Activated T-helper 2 cell treated with anti-CD3 and anti-CD28 coated beads, Interferon-gamma antibody, Interleukin-2, Interleukin-4, amounts not matched to agents 10 μg/mL and 5 μg/mL and 100 μg/mL, durations not matched to agents 14 hours and 24 hours and 36 hours (primary cell): ENCODE measurements at regions of chr12 and their contacts with region 1.

Region 1: DNA sequence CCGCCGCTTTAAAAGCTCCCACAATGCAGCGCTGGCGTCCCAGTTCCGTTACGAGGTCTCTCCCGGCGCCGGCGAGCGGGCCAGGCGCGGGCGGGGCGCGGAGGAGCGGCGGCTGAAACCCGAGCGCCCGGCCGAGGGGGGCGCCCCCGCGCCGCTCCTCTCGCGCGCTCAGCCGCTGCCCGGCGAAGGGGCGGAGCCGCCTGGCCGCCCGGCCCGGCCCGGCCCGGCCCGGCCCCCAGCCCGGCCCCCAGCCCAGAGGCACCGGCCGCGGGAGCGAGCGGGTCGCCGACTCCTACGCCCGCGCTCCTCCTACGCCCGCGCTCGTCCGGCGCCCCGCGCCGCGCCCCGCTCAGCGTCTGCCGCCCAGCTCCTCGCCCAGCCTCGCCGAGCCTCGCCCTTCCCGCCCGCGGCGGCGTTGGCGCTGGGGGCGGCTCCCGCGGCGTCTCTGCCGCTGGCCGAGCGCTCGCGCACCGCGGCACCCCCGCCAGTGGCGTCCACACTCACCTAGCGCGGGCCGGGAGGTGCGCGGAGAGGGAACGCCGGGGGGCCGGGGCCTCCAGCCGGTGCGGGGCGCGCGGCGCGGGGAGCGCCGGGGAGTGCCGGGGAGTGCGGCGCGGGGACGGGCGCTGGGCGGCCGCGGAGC is at the start of gene RASSF8:
- DNase-seq: peak; percentile 11
- H3K4me3 Mint-ChIP-seq: peak within 1 kb of the TSS; percentile 79
- H3K27ac Mint-ChIP-seq: no peak within 1 kb of the TSS
- H3K4me1 Mint-ChIP-seq: peaks cover 6% of the 10 kb centered on the region
- H3K27me3 Mint-ChIP-seq: peaks cover 64% of the 10 kb centered on the region
- total RNA-seq, gene RASSF8: 0.16 and 0.28 TPM in 2 replicates

Region 2: DNA sequence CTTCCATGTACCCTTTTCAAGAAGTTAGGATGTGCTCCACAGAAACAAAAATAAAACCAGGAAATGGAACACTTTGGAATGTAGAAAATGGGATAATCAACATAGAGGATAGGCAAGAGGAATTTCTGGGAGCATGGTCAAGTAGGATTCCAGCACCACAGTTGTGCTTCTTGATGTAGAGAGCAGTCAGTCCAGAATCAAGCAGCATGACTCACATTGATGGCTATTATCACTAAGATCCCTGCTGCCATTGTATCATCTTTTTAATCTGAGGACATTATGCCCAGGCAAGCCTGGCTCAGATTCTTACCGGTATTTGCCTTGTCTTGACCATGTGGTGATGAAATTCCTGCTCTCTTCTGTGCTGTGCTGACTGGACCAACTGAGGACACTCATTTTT is 757.8 kb before region 1 on chr12:
- intact Hi-C with region 1: loop called (anchors 5 kb)
- DNase-seq: no peak
- H3K4me3 Mint-ChIP-seq: no peak overlapping the region
- H3K27ac Mint-ChIP-seq: no peak overlapping the region
- H3K4me1 Mint-ChIP-seq: peaks cover 7% of the 10 kb centered on the region
- H3K27me3 Mint-ChIP-seq: no peaks in the 10 kb centered on the region

Region 3: DNA sequence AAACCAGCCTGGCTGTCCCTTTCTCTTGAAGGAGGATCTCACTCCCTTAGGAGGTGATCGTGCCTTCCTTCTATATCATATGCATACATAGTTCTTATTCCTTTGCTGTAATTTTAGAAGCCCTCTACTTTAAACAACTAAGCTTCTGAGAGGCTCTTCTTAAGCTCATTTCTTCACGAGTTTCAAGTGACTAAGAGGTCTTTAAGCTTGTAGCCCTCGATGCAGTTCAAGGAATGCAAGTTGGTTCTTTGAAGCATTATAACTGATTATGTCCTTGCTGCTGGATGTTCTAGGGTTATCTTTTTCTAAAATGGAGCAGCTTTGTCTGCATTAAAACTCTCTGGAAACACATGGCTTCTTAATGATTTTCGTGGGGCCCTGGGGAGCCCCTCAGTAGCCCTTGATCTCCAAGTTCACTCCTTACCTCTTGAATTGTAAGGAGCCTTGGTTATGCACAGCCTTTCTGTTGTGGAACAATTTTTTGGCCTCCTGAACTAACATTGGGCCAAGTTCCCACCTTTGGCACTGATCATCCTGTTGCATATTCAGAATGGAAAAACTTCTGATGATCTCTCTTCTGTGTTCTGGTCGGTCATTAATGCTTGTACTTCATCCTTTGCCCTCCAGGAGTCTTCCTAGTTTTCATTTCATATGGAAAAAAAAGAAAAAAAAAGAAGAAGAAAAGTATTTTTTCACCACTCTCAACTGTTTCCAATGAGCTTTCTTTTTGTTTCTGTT is 12.5 kb after region 1 on chr12:
- intact Hi-C with region 1: no loop called
- DNase-seq: no peak
- H3K4me3 Mint-ChIP-seq: no peak overlapping the region
- H3K27ac Mint-ChIP-seq: no peak overlapping the region
- H3K4me1 Mint-ChIP-seq: no peaks in the 10 kb centered on the region
- H3K27me3 Mint-ChIP-seq: peaks cover 3% of the 10 kb centered on the region

Region 4: GRCh38 chr12:25997201-25997963 is 38.8 kb after region 1 on chr12:
- intact Hi-C with region 1: no loop called
- DNase-seq: no peak
- H3K4me3 Mint-ChIP-seq: no peak overlapping the region
- H3K27ac Mint-ChIP-seq: no peak overlapping the region
- H3K4me1 Mint-ChIP-seq: no peaks in the 10 kb centered on the region
- H3K27me3 Mint-ChIP-seq: peaks cover 2% of the 10 kb centered on the region

Region 5: DNA sequence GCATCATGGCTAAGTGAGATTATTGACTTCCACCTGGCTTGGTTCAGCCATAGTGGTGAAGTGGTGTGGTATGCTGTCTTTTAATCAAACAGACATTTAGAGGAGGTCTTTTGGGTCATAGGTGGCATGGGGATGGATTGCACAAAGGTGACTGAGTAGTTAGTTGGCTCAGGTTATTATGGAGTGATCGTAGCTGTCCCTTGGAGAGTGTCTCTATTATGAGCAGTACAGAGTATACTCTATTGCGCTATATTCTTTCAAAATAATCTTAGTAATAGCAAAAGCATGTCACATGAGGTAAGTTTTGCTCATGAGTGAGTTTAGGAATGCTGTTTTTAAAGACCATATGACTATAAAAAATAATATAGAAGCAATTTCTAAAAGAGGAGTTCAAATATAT is 60.4 kb after region 1 on chr12:
- intact Hi-C with region 1: no loop called
- DNase-seq: no peak
- H3K4me3 Mint-ChIP-seq: no peak overlapping the region
- H3K27ac Mint-ChIP-seq: no peak overlapping the region
- H3K4me1 Mint-ChIP-seq: no peaks in the 10 kb centered on the region
- H3K27me3 Mint-ChIP-seq: peaks cover 16% of the 10 kb centered on the region